Posterior vena cava (tissue), 2 donors: ENCODE measurements at regions of chr10 and their contacts with region 1.

Region 1: GRCh38 chr10:97572214-97572989 is at the start of gene ANKRD2:
- DNase-seq: peak; percentile 95
- total RNA-seq, gene ANKRD2: 0.67 to 1.1 TPM

Region 2: DNA sequence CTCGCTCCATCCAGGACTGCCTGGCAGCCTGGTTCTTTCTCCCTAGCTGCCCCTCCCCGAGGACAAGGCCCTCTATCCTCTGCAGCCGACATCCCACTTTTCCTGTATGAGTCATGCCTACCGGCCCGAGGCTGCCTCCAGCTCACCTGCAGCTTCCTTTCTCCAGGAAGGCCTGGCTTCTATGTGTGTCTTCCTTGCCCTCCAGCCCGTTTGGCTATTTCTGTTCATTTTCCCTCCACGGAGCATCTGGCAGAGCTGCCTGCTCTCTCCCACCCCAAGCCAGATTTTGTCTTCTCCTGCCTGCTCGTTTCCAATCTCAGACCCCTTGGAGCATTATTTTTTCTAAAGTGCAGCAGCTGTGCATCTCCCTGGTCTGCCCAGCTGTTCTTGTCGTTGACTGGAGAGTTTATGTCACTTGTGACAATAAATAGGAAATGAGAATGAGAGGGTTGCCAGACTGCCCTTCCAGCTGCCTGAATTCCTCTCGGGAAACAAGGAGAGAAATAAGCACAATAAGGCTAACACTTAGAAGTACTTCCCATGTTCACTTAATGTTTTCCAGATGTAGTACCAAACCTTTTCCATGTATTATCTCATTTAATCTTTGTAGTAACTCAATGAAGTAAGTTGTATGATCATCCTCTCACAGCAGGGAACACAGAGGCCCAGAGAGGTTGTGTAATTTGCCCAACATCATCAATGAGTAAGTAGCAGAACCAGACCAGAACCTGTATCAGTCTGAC is 53.9 kb before region 1 on chr10:
- intact Hi-C with region 1: no loop called
- DNase-seq: no peak

Region 3: GRCh38 chr10:97612386-97612785 is 40.0 kb after region 1 on chr10:
- intact Hi-C with region 1: loop called (anchors 2 to 5 kb)
- DNase-seq: peak; percentile 15